Activated naive CD4-positive, alpha-beta T cell treated with anti-CD3 and anti-CD28 coated beads for 36 hours (primary cell): ENCODE measurements at regions of chr11 and their contacts with region 1.

Region 1: DNA sequence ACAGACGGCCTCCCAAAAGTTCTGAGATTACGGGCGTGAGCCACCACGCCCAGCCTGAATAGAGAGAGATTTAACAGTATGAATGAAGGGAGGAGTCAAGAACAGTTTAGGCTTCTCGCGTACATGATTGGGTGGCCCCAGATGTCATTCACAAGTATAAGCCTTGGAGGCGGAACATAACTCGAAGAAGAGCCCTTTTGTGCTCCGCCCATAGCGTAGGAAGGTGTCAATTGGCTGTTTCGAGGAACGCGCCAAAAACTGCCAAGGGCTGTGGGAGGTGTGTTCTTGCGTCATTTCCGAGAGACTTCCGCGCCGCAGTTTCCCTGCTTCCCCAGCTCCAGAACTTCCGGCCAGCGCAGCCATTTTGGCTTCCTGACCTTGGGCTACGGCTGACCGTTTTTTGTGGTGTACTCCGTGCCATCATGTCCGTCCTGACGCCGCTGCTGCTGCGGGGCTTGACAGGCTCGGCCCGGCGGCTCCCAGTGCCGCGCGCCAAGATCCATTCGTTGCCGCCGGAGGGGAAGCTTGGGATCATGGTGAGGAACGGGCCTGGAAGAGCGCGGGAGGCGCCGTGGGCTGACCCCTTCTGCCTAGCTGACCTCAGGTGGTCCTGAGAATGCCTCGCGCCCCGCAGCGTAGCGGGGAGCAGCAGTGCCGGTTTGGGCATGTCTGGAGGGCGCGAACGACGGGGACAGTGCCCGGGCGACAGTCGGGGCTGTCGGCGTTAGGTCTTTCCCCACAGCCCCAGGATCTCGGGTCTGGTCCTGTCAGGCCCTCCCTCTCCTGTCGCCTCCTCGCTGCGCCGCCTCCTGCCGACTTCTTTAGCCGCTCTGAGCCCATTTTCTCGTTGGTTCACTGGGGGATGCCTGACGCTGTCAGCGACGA is at the start of gene COX8A:
- DNase-seq: peak; percentile 99
- H3K4me3 Mint-ChIP-seq: peak within 1 kb of the TSS; percentile 95
- H3K27ac Mint-ChIP-seq: peak within 1 kb of the TSS; percentile 98
- H3K4me1 Mint-ChIP-seq: peaks cover 27% of the 10 kb centered on the region
- H3K27me3 Mint-ChIP-seq: no peaks in the 10 kb centered on the region
- total RNA-seq, gene COX8A: 669 to 675 TPM

Region 2: GRCh38 chr11:63536669-63537292 is 437.7 kb before region 1 on chr11 and contains the start of gene PLAAT4:
- CTCF ChIA-PET with region 1: no interaction called
- intact Hi-C with region 1: loop called (anchors 1 kb)
- DNase-seq: peak; percentile 42
- H3K4me3 Mint-ChIP-seq: peak within 1 kb of the TSS; percentile 72
- H3K27ac Mint-ChIP-seq: peak within 1 kb of the TSS; percentile 69
- H3K4me1 Mint-ChIP-seq: peaks cover 76% of the 10 kb centered on the region
- H3K27me3 Mint-ChIP-seq: no peaks in the 10 kb centered on the region
- total RNA-seq, gene PLAAT4: 16.1 to 16.6 TPM

Region 3: DNA sequence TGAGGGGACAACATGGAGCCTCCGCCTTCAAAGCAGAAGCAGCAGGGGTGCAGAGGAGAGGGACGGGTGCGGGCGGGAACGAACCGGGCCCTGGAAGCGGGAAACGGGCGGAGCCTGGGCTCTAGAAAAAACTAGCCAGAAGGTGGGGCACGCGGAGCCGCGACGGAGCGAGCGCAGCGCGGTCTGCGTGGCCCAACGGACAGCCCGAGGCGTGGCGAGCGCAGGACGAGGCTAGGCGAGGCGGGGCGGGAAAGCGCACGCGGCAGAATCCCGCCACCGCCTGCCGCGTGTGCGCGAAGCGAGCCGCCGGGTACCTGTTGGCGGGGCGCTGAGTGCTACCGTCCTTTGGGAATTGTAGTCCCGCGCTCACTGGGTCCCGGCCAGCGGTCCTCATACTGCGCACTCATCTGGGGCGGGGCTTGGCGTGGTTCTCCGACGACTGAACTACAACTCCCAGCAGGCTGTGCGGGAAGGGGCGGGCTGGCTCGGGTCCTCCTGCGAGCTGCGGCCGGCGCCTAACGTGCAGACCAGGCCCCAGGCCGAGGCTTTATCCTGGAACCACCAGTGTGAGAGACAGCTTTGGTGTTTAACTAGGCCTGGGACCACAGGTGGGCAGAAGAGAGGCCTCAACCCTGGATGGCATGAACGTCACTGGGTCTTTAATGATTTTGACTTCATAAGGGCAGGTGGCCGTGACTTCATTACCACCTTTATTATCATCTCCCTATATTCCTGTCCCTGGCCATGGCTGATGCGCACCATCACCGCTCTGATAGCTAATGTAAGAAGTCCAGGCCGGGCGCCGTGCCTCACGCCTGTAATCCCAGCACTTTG is 303.0 kb before region 1 on chr11 and contains the start of gene ATL3:
- CTCF ChIA-PET with region 1: no interaction called
- intact Hi-C with region 1: loop called (anchors 1 kb)
- DNase-seq: peak; percentile 93
- H3K4me3 Mint-ChIP-seq: peak within 1 kb of the TSS; percentile 84
- H3K27ac Mint-ChIP-seq: peak within 1 kb of the TSS; percentile 83
- H3K4me1 Mint-ChIP-seq: peaks cover 39% of the 10 kb centered on the region
- H3K27me3 Mint-ChIP-seq: no peaks in the 10 kb centered on the region
- total RNA-seq, gene ATL3: 19.5 to 21.0 TPM

Region 4: DNA sequence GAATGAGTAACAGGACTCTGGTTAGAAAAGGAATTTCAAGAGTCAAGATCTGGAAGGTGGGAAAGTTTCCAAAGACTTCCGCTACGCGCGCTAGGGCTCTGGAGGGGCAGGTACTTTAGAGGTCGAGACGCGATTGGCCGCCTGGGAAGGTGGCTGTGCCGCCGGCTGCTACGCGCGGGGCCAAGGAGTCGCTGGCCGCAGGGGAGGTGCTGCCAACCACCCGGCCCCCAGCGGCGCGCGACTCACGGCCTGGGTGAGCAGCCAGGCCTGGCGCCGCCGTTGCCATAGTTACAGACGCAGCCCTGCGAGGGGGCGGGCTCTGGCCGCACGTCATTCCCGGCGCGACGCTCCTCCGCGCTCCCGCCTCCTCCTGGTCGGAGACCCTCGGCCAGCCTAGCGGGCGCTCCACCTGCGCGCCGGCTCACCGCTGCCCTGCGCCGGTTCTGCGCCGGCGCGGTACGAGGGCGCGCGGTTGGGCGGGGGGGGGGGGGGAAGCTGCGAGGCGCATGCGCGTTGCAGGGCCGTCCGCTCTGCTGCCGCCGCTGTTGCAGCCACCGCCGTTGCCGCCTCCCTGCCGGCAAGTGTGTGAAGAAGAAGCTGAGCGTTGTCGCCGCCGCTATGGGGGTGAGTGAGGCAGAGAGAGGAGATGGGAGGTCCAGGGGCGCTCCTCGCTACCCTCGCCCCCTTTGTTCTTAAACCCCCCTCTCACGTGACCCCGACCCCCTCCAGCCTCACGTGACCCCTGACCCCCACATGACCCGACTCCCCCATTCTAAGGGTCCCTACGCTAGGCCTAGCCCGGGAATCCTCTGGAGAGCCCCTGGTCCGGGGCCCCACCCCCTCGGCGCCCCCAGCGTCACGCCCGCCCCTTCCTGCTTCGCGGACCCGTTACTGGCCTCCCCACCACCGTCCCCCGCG is 35.8 kb before region 1 on chr11 and contains the start of gene NAA40:
- CTCF ChIA-PET with region 1: no interaction called
- intact Hi-C with region 1: loop called (anchors 1 kb)
- DNase-seq: peak; percentile 90
- H3K4me3 Mint-ChIP-seq: peak within 1 kb of the TSS; percentile 77
- H3K27ac Mint-ChIP-seq: peak within 1 kb of the TSS; percentile 52
- H3K4me1 Mint-ChIP-seq: peaks cover 13% of the 10 kb centered on the region
- H3K27me3 Mint-ChIP-seq: no peaks in the 10 kb centered on the region
- total RNA-seq, gene NAA40: 10.3 to 13.2 TPM

Region 5: DNA sequence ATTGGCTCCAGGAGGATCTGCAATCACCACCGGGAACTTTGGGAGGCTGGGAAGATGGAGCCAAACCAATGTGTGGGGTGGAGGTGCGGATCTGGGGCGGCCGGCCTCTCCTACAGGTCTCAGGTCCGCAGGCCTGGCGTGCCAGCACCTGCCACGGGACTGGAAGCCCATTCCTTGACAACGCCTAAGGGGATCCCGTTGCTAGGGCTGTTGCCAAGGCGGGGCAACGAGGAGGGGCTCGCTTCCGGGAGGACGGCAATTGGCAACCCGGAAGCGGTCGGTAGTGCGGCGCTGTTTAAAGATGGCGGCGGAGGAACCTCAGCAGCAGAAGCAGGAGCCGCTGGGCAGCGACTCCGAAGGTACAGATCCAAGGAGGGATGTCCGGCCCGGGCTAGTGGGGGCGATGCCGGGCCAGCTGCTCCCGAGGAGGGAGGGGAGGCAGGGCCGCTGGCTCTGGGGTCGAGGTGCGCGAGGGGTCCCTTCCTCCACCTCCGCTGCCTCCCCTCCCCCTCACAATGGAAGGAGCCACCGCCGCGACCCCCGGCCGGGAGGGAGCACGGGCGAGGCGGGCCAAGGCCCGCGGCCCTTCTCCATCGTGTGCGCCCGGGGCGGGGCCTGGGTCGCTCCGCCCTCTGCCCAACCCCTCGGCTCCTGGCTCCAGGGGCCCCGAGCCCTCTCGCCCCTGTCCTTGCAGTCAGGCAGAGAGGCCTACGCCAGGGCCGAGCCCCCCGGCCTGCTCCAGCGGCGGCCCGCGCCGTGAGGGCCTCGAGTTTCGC is 11.8 kb after region 1 on chr11 and contains the start of gene OTUB1:
- CTCF ChIA-PET with region 1: no interaction called
- intact Hi-C with region 1: loop called (anchors 1 kb)
- DNase-seq: peak; percentile 91
- H3K4me3 Mint-ChIP-seq: peak within 1 kb of the TSS; percentile 94
- H3K27ac Mint-ChIP-seq: peak within 1 kb of the TSS; percentile 93
- H3K4me1 Mint-ChIP-seq: peaks cover 30% of the 10 kb centered on the region
- H3K27me3 Mint-ChIP-seq: no peaks in the 10 kb centered on the region
- total RNA-seq, gene OTUB1: 61.9 to 63.0 TPM